ENCODE measurements at regions of chr14 and their contacts with region 1.

Region 1: DNA sequence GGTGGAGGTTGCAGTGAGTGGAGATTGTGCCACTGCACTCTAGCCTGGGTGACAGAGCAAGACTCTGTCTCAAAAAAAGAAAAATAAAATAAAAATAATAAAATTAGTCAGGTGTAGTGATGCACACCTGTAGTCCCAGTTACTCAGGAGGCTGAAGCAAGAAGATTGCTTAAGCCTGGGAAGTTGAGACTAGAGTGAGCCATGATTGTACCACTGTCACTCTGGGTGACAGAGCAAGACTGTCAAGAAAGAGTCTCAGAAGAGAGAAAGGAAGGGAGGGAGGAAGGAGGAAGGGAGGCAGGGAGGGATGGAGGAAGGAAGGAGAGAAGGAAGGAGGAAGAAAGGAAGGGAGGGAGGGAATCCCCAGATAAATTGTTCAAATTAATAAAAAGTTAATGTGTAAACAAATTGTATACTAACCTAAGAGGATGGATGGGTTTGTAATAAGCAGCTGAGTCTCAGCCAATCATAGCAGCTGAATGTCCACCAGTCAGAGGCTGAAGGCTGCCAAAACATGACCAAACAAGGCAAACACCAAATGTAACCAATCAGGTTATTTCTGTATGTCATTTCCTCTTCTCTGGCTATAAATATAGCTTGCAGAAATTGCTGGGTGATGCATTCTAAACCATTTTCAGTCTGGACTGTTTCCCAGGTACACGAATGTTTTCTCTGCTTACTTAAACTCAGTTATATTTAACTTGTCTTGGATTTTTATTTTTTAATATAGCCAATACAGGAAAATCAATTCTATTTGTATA is 6.1 kb upstream of the CDCA4 start:
- DNase-seq: no peak
- H3K4me3 Mint-ChIP-seq: no peak overlapping the region
- H3K27ac Mint-ChIP-seq: peak overlapping the region; percentile 90
- H3K4me1 Mint-ChIP-seq: peaks cover 51% of the 10 kb centered on the region
- H3K27me3 Mint-ChIP-seq: no peaks in the 10 kb centered on the region

Region 2: DNA sequence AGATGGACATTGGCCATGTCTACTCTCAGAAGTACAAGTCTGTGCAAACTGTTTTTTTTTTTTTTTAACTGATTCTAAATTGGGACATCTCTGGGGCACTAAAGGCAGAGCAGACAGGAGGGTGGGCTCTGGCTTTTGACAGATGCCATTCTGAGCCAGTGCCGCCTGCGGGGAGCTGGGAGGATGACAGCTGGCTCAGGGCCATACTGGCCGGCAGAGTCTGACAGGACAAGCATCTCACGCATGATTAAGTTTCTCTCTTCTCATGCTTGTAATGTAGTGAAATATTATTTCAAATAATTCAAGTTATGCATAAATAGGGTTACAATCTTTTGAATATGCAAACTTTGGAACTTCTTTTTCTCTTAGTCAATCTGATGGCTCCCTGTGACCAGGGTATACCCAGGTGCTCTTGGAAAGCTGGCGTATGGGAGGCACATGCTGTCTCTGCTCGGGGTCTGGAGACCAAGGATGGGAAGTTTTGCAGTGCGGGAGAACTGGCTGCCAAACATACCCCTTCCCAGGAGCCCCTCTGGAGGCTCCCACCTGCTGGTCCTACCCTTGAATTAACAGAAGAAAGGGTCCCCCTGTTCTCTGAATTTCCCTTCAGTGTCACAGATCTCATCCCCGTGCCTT is 13.7 kb before region 1 on chr14:
- CTCF ChIA-PET with region 1: no interaction called
- POLR2A ChIA-PET with region 1: interaction called, 12 read pairs
- DNase-seq: no peak
- H3K4me3 Mint-ChIP-seq: no peak overlapping the region
- H3K27ac Mint-ChIP-seq: peak overlapping the region; percentile 75
- H3K4me1 Mint-ChIP-seq: peaks cover 63% of the 10 kb centered on the region
- H3K27me3 Mint-ChIP-seq: no peaks in the 10 kb centered on the region

Region 3: DNA sequence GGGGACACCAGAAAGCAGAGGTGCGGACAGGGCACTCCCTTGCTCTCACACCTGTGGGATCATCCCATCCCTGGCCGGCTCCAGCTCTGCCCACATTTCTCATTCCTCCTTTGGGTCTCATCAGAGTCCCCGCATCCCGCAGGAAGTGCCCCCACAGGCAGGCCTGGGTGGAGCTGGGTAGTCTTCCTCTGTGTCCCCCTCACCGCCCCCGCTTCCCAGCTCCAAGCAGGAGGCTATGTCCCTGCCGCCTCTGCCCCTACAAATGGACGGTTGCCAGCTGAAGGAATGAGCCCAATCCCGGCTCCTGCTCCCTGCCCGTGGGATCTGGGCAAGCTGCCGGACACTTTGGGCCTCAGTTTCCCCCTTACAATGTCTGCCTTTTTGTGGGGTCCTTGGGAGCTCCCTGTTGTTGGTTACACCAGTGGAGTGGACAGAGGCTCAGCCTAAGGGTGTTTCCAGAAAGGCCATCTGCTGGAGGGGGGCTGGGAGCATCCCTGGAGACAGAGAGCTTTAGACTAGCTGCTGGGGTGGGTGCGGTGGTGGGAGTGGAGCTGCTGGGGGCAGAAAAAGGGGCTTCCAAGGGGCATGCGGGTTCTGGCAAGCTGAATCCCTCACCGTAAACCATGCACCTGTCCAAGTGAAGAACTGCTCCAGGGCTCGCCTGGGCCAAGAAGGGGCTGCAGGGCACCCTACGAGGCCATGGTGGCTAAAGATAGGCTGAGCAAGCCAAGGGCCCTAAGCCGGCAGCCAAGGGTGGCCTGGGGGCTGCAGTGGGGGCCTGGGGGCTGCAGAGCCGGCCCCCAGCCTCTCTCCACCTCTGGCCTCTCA is 46.1 kb after region 1 on chr14:
- CTCF ChIA-PET with region 1: no interaction called
- POLR2A ChIA-PET with region 1: no interaction called
- DNase-seq: no peak
- H3K4me3 Mint-ChIP-seq: no peak overlapping the region
- H3K27ac Mint-ChIP-seq: no peak overlapping the region
- H3K4me1 Mint-ChIP-seq: peaks cover 50% of the 10 kb centered on the region
- H3K27me3 Mint-ChIP-seq: peaks cover 3% of the 10 kb centered on the region

Region 4: DNA sequence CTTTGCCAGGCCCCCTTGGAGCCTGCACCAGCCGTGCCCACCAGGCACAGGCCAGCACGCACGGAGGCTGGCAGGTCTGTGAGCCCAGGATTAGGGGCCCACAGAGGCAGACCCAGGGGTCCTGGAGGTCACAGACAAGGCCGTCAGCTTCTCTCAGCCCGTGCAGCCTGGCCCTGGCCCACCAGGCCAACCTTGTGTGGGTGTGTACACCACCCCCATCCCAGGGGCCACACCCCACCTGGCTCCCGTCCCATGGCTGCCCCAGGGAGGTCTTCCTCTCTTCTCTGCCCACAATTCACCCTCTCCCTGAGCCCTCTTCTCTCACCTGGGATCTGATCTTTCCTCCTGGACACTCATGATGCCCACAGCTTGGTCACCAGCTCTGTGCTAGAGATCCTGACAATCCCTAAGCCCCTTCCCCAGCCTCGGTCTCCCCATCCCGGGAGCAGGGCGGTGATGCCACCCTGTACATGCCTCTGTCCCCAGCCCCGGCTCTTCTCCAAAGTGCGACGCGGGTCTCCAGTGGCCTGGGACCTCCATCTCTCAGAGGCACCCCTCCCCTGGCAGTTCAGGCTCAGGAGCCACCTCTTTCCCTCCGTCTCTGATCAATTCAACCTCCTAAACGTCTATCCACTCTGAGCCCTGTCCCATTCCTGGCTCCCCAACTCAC is 69.4 kb after region 1 on chr14:
- CTCF ChIA-PET with region 1: no interaction called
- POLR2A ChIA-PET with region 1: no interaction called
- DNase-seq: no peak
- H3K4me3 Mint-ChIP-seq: no peak overlapping the region
- H3K27ac Mint-ChIP-seq: no peak overlapping the region
- H3K4me1 Mint-ChIP-seq: peaks cover 17% of the 10 kb centered on the region
- H3K27me3 Mint-ChIP-seq: peaks cover 16% of the 10 kb centered on the region